ENCODE measurements at regions of chr7 and their contacts with region 1.

Region 1: DNA sequence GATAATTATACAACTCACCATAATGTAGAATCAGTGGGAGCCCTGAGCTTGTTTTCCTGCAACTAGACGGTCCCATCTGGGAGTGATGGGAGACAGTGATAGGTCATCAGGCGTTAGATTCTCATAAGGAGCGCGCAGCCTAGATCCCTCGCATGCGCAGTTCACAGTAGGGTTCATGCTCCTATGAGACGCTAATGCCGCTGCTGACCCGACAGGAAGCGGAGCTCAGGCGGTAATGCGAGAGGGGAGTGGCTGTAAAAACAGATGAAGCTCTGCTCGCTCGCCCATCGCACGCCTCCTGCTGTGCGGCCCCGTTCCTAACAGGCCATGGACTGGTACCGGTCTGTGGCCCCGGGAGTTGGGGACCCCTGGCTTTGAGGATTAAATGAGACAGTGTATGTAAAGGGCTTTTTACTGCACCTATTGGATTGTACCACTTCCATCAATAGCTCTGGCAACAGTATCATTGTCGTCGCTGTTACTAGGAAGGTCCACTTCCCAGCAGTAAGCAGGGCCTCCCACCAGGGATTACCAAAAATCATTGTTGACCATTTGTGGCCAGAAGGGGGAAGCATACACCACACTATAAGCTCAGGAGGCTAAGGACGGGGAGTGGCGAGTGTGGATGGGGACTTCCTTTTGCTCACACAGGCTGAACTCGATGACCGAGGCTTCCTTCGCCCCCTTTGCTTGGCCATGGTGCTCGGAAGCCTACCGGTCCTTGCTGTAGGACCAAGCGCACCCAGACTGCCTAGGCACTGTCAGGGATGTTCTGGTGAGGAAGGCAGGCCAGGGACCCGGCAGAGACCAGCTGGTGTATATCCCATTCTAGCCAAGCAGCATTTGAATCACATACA is 26.4 kb downstream of the AKR1B1 start:
- DNase-seq: peak; percentile 65 to 93 (median 81)

Region 2: DNA sequence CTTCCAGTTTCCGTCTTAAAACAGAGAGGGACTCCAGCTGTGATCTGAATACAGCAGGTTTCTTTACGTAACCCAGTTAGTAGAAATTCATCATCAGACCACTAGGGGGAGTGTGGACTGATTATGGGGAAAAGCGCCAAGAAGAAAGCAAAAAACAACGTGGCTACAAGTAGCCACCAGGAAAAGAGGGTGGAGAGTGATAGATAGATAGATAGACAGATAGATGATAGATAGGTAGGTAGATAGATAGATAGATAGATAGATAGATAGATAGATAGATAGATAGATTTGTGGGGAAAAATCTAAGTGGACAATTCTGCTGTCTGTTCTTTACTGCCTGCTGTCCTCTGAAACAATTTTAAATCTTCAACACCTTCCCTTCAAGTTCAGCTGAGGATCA is 82.1 kb after region 1 on chr7:
- intact Hi-C with region 1: loop called (anchors 5 kb)
- DNase-seq: peak in 15 of 42 donors; percentile 17 to 78 (median 44)

Measured in head of caudate nucleus (tissue), 42 donors.